HepG2 (cell line): ENCODE measurements at regions of chr10 and their contacts with region 1.

Region 1: GRCh38 chr10:95133016-95133752 is 60.9 kb upstream of the ACSM6 start:
- DNase-seq: peak; percentile 88
- ATAC-seq: peak; percentile 97
- H3K4me3 ChIP-seq: no peak overlapping the region
- H3K27ac ChIP-seq: no peak overlapping the region
- H3K4me1 ChIP-seq: peaks cover 37% of the 10 kb centered on the region
- H3K27me3 ChIP-seq: no peaks in the 10 kb centered on the region
- CTCF ChIP-seq: peak; percentile 98
- EP300 ChIP-seq: peak in 1 of 2 experiments; percentile 57; a peak in 1 of 4 replicates
- POLR2A ChIP-seq: no peak
- RAD21 ChIP-seq: peak; percentile 89

Region 2: DNA sequence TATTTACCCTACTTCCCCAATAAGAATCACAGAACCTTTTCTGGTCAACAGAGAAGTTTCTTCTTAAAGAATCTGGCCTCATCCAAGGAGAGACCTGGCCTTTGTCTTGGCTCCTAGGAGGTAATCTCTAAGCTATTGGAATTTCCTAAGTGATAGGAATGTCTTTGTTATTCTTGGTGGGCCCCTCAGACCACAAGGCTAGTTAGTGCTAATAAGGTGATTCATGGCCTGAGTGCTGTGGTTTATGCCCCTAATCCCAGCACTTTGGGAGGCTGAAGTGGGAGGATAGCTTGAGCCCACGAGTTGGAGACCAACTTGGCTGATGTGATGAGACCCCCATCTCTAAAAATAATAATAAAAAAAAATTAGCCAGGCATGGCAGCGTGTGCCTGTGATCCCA is 509.6 kb before region 1 on chr10:
- CTCF ChIA-PET with region 1: no interaction called
- POLR2A ChIA-PET with region 1: no interaction called
- in situ Hi-C with region 1: no loop called
- intact Hi-C with region 1: loop called (anchors 10 kb)
- DNase-seq: no peak
- ATAC-seq: no peak
- H3K4me3 ChIP-seq: no peak overlapping the region
- H3K27ac ChIP-seq: no peak overlapping the region
- H3K4me1 ChIP-seq: no peaks in the 10 kb centered on the region
- H3K27me3 ChIP-seq: no peaks in the 10 kb centered on the region
- CTCF ChIP-seq: no peak
- EP300 ChIP-seq: no peak
- POLR2A ChIP-seq: no peak
- RAD21 ChIP-seq: no peak

Region 3: DNA sequence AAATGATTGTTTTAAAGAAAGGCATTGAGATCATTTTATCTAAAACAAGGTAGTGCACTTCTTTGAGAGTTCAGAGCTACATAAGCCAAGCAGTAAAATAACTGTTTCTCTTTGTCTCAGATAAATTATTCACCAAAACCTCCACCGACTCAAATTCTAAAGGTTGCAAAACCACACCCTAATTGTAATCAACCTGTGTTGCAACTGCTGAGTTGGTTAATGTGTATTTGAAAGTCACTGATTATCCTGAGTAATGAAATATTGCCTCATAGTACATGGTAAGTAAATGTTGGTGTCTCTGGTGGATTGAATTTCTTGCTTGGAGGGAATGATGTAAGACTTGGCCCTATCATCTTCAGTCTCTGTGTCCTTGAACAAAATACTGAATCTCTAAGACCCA is 230.6 kb before region 1 on chr10:
- CTCF ChIA-PET with region 1: no interaction called
- POLR2A ChIA-PET with region 1: no interaction called
- in situ Hi-C with region 1: no loop called
- intact Hi-C with region 1: no loop called
- DNase-seq: peak; percentile 91
- ATAC-seq: peak; percentile 86
- H3K4me3 ChIP-seq: peak overlapping the region in 1 of 3 experiments; percentile 3; a peak in 1 of 6 replicates
- H3K27ac ChIP-seq: peak overlapping the region; percentile 54
- H3K4me1 ChIP-seq: peaks cover 41% of the 10 kb centered on the region
- H3K27me3 ChIP-seq: no peaks in the 10 kb centered on the region
- CTCF ChIP-seq: no peak
- EP300 ChIP-seq: peak in 1 of 2 experiments; percentile 91; a peak in 2 of 4 replicates
- POLR2A ChIP-seq: no peak
- RAD21 ChIP-seq: no peak

Region 4: DNA sequence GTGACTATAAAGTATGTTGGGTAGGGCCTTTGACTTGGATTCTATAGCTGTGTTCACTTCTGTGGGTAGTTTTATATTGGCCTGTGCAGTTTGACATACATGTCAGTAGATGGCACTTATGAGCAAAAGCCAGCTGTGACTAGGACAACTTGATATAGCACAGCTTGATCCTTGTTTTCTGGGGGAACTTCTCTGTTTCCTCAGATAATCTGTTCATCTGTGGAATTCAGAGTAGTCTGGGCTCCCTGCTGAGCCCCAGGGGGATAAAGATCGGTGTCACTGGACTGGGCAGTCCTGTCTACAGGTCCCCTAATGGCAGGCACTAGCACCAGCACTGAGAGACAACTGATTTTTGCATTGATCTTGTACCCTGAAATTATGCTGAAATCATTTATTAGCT is 169.3 kb before region 1 on chr10:
- CTCF ChIA-PET with region 1: no interaction called
- POLR2A ChIA-PET with region 1: no interaction called
- in situ Hi-C with region 1: no loop called
- intact Hi-C with region 1: loop called (anchors 10 kb)
- DNase-seq: peak; percentile 45
- ATAC-seq: peak; percentile 91
- H3K4me3 ChIP-seq: no peak overlapping the region
- H3K27ac ChIP-seq: no peak overlapping the region
- H3K4me1 ChIP-seq: no peaks in the 10 kb centered on the region
- H3K27me3 ChIP-seq: no peaks in the 10 kb centered on the region
- CTCF ChIP-seq: peak; percentile 71
- EP300 ChIP-seq: no peak
- POLR2A ChIP-seq: no peak
- RAD21 ChIP-seq: no peak; the same call in 1 of the 2 replicates

Region 5: GRCh38 chr10:95229724-95230627 is 96.8 kb after region 1 on chr10:
- CTCF ChIA-PET with region 1: no interaction called
- POLR2A ChIA-PET with region 1: no interaction called
- in situ Hi-C with region 1: no loop called
- intact Hi-C with region 1: no loop called
- DNase-seq: no peak
- ATAC-seq: no peak
- H3K4me3 ChIP-seq: no peak overlapping the region
- H3K27ac ChIP-seq: no peak overlapping the region
- H3K4me1 ChIP-seq: no peaks in the 10 kb centered on the region
- H3K27me3 ChIP-seq: no peaks in the 10 kb centered on the region
- CTCF ChIP-seq: no peak
- EP300 ChIP-seq: no peak
- POLR2A ChIP-seq: no peak
- RAD21 ChIP-seq: no peak

Region 6: DNA sequence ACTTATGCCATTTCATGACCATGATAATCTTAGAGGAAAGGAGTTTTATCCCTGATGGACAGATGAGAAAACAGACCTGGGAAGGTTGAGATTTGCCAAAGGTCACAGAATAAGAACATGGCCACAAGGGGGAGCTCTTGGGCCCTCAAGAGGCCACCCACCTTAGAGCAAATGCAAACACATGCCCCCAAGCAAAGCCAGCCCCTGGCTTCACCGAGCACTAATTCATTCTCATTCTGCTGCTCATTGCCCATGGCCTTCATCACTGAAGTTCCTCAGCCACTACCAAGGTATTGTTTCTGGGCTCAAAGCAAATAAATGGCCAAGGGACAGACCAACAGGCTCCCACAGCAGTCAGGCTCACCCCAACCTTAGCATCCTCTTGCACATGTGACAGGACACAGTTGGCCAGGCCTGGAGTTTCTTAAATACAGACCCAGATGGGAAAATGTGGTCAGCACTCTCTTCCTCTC is 113.4 kb after region 1 on chr10:
- CTCF ChIA-PET with region 1: interaction called, 34 read pairs
- POLR2A ChIA-PET with region 1: no interaction called
- in situ Hi-C with region 1: loop called (anchors 5 kb)
- intact Hi-C with region 1: loop called (anchors 1 kb)
- DNase-seq: peak; percentile 62
- ATAC-seq: peak; percentile 76
- H3K4me3 ChIP-seq: no peak overlapping the region
- H3K27ac ChIP-seq: peak overlapping the region; percentile 21
- H3K4me1 ChIP-seq: peaks cover 19% of the 10 kb centered on the region
- H3K27me3 ChIP-seq: no peaks in the 10 kb centered on the region
- CTCF ChIP-seq: peak; percentile 83
- EP300 ChIP-seq: no peak
- POLR2A ChIP-seq: no peak
- RAD21 ChIP-seq: peak; percentile 84